WTC11 (cell line): ENCODE measurements at regions of chr5 and their contacts with region 1.

Region 1: GRCh38 chr5:36079200-36079761 is 12.6 kb upstream of the UGT3A2 start:
- DNase-seq: peak; percentile 31
- ATAC-seq: peak; percentile 99
- H3K4me3 Mint-ChIP-seq: peak overlapping the region; percentile 38
- H3K27ac Mint-ChIP-seq: peak overlapping the region; percentile 24
- H3K4me1 Mint-ChIP-seq: peaks cover 21% of the 10 kb centered on the region
- H3K27me3 Mint-ChIP-seq: no peaks in the 10 kb centered on the region; the same call in 1 of the 2 replicates
- CTCF ChIP-seq: peak; percentile 64

Region 2: DNA sequence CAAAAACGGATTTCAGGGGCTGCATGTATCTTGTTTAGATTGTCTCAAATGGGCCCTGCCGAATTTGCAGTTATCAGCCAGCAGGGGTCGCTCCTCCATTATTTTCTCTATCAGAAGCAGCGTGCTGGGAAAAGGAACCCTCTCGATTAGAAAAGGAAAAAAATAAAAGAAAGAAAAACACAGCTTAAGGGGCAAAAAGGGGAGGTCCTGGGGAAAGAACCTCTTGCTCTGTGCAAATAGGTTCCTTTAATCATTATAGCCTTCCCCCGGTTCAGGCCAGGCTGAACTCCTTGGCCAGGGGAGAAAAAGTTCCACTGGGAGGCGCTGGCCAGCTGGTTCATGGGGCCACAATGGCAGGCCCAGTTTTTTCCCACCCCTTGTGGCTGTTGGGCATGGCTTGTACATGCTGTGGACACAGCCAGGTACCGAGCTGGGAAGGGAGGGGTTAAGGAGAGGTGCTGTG is 115.9 kb before region 1 on chr5:
- CTCF ChIA-PET with region 1: interaction called, 13 read pairs
- POLR2A ChIA-PET with region 1: no interaction called
- DNase-seq: peak; percentile 61
- ATAC-seq: peak; percentile 92
- H3K4me3 Mint-ChIP-seq: no peak overlapping the region
- H3K27ac Mint-ChIP-seq: no peak overlapping the region
- H3K4me1 Mint-ChIP-seq: no peaks in the 10 kb centered on the region
- H3K27me3 Mint-ChIP-seq: peaks cover 17% of the 10 kb centered on the region
- CTCF ChIP-seq: peak; percentile 81

Region 3: GRCh38 chr5:36066540-36067210 is 12.6 kb before region 1 on chr5 and contains the start of gene UGT3A2:
- CTCF ChIA-PET with region 1: interaction called, 70 read pairs
- POLR2A ChIA-PET with region 1: interaction called, 3 read pairs
- DNase-seq: peak; percentile 77
- ATAC-seq: peak; percentile 99
- H3K4me3 Mint-ChIP-seq: peak within 1 kb of the TSS; percentile 89
- H3K27ac Mint-ChIP-seq: peak within 1 kb of the TSS; percentile 68
- H3K4me1 Mint-ChIP-seq: peaks cover 15% of the 10 kb centered on the region
- H3K27me3 Mint-ChIP-seq: peaks cover 23% of the 10 kb centered on the region
- CTCF ChIP-seq: no peak
- total RNA-seq, gene UGT3A2: 13.6 to 16.5 TPM (median 15.7 TPM) in 3 replicates

Region 4: GRCh38 chr5:36145311-36145710 is 66.0 kb after region 1 on chr5:
- CTCF ChIA-PET with region 1: interaction called, 58 read pairs
- POLR2A ChIA-PET with region 1: no interaction called
- DNase-seq: no peak
- ATAC-seq: no peak
- H3K4me3 Mint-ChIP-seq: no peak overlapping the region
- H3K27ac Mint-ChIP-seq: no peak overlapping the region
- H3K4me1 Mint-ChIP-seq: peaks cover 2% of the 10 kb centered on the region
- H3K27me3 Mint-ChIP-seq: no peaks in the 10 kb centered on the region
- CTCF ChIP-seq: no peak

Region 5: GRCh38 chr5:36177715-36178523 is 98.6 kb after region 1 on chr5:
- CTCF ChIA-PET with region 1: interaction called, 16 read pairs
- POLR2A ChIA-PET with region 1: no interaction called
- DNase-seq: no peak
- ATAC-seq: peak; percentile 51
- H3K4me3 Mint-ChIP-seq: no peak overlapping the region
- H3K27ac Mint-ChIP-seq: no peak overlapping the region
- H3K4me1 Mint-ChIP-seq: no peaks in the 10 kb centered on the region
- H3K27me3 Mint-ChIP-seq: no peaks in the 10 kb centered on the region
- CTCF ChIP-seq: no peak

Region 6: GRCh38 chr5:36695677-36696673 is 616.7 kb after region 1 on chr5:
- CTCF ChIA-PET with region 1: interaction called, 15 read pairs
- POLR2A ChIA-PET with region 1: no interaction called
- DNase-seq: peak; percentile 79
- ATAC-seq: peak; percentile 75
- H3K4me3 Mint-ChIP-seq: no peak overlapping the region
- H3K27ac Mint-ChIP-seq: no peak overlapping the region
- H3K4me1 Mint-ChIP-seq: peaks cover 12% of the 10 kb centered on the region
- H3K27me3 Mint-ChIP-seq: peaks cover 44% of the 10 kb centered on the region
- CTCF ChIP-seq: peak; percentile 68